Activated naive CD4-positive, alpha-beta T cell treated with anti-CD3 and anti-CD28 coated beads for 36 hours (primary cell): ENCODE measurements at regions of chr2 and their contacts with region 1.

Region 1: DNA sequence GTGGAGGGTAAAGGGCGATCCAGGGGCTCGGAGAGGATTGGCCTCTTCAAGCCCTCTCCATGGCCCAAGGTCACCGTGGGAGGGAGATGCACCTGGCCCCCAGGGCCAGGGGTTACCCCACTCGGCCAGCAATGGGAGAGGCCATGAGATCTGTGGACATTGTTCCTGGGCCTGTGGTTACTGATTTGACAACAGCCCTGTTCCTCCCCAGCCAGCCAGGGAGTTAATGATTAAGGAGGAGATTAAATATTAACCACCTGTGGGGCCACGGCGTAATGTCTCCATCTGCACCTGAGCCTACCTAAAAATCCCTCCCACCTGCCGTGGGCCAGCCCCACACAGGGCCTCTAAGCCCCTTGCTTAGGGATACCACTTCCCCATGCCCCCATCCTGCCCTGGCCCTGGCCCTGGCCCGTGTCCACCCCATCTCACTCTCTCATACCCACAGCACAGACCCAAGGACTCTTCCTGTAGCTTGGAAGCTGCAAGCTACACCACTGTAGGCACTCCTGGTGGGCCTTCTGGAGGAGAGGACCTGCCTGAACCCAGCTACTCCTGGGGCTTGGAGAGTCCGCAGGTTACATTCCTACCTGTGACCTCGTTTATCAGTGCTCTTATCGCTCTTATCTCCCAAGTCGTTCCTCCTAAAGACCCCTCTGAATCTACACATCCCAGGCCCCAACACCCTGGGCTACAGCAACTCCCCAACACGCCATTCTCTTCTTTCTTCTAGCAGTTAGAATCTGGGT is 32.1 kb downstream of the ZFP36L2 start:
- DNase-seq: no peak
- H3K4me3 Mint-ChIP-seq: peak overlapping the region; percentile 79
- H3K27ac Mint-ChIP-seq: peak overlapping the region; percentile 93
- H3K4me1 Mint-ChIP-seq: peaks cover 57% of the 10 kb centered on the region
- H3K27me3 Mint-ChIP-seq: no peaks in the 10 kb centered on the region

Region 2: DNA sequence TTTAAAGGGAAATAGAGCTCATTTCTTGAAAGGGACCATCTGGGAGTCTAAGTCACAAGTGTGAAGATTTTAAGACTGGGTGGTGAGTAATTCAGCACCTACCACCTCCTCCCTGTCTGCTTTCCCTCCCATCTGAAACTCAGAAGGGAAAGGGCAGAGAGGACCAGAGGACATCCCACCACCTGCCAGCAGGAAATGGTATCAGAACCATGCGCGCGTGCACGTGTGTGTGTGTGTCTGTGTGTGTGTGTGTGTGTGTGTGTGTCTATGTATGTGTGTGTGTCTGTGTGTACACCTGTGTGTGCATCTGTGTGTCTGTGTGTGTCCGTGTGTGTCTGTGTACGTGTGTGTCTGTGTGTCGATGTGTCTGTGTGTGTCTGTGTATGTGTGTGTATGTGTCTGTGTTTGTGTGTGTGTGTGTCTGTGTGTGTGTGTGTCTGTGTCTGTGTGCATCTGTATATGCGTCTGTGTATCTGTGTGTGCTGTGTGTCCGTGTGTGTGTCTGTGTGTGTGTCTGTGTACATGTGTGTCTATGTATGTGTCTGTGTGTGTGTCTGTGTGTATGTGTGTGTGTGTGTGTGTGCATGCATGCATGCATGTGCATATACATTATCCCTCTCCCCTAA is 44.7 kb before region 1 on chr2:
- CTCF ChIA-PET with region 1: interaction called, 7 read pairs
- intact Hi-C with region 1: loop called (anchors 1 kb)
- DNase-seq: peak; percentile 90
- H3K4me3 Mint-ChIP-seq: peak overlapping the region; percentile 26
- H3K27ac Mint-ChIP-seq: peak overlapping the region; percentile 62
- H3K4me1 Mint-ChIP-seq: peaks cover 70% of the 10 kb centered on the region
- H3K27me3 Mint-ChIP-seq: no peaks in the 10 kb centered on the region

Region 3: DNA sequence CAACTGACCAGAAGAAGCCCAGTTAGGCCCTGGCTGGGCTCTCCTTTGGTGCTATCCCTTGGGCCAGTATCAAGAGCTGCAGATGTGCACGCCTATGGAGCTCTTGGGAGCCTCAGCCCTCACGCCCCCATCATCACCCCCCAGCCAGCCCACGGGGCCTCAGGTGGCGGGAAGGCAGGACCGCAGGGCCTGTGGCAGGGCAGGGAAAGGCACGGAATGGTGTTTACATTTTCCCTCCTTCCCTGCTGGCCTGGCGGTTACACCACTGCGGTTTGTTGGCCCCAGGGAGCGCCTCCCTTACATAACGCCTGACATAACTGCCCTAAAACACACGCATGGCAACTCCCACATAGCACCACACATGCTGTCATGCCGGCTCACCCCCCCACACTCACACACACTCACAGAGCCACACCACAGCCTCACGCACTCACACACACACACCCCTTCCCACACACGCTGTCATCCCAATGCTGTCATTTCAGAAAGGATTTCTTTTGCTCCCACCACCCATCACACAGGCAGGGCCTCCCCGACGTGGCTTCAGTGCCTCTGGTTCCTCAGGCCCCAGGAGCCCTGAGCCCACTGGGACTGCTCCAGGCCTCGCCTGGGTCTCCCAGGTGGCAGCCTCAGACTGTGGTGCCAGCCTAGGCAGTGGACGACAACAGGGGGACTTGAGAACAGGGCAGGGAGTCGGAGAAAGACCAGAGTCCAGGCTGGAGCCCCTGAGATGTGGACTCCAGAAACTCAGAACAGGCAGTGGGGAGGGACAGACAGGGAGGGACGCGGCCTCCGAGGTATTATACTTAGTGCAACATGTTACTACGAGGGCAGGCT is 16.4 kb after region 1 on chr2:
- CTCF ChIA-PET with region 1: interaction called, 3 read pairs
- intact Hi-C with region 1: loop called (anchors 1 kb)
- DNase-seq: peak; percentile 68
- H3K4me3 Mint-ChIP-seq: no peak overlapping the region
- H3K27ac Mint-ChIP-seq: no peak overlapping the region
- H3K4me1 Mint-ChIP-seq: peaks cover 27% of the 10 kb centered on the region
- H3K27me3 Mint-ChIP-seq: no peaks in the 10 kb centered on the region

Region 4: GRCh38 chr2:43219383-43220228 is 25.3 kb after region 1 on chr2:
- CTCF ChIA-PET with region 1: interaction called, 22 read pairs
- intact Hi-C with region 1: loop called (anchors 1 kb)
- DNase-seq: peak; percentile 89
- H3K4me3 Mint-ChIP-seq: peak overlapping the region; percentile 93
- H3K27ac Mint-ChIP-seq: peak overlapping the region; percentile 98
- H3K4me1 Mint-ChIP-seq: peaks cover 49% of the 10 kb centered on the region
- H3K27me3 Mint-ChIP-seq: no peaks in the 10 kb centered on the region